ENCODE measurements at regions of chr17 and their contacts with region 1.

Region 1: DNA sequence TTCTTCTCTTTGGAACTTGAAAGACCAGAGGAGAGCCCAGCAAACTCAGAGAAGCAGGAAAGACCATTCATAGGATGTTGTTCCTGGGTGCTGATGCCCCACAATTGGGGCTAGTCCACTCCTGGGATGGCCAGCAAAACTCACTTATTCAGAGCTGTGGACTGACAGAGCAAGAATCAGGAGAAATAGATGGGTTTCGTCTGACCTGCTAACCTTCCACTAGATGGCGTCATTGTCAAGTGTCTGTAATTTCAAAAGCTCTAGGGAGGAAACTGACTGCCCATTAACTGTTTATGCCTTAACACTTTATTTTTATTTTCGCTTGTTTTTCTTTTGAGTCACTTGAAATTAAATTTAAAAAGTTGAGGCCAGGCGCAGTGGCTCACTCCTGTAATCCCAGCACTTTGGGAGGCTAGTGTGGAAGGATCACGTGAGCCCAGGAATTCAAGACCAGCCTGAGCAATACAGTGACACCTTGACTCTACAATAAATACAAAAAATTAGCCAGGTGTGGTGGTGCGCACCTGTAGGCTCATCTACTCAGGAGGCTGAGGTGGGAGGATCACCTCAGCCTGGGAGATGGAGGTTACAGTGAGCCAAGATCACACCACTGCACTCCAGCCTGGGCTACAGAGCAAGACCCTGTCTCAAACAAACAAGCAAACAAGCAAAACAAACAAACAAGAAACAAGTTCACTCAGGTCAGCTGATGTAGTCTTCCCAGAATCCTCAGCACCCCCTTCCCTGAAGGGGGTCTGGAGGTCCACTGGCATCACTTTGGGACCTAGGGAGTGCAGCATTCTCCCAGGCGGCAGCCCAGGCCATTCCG is 28.6 kb upstream of the MILR1 start:
- DNase-seq: peak; percentile 85
- H3K4me3 Mint-ChIP-seq: no peak overlapping the region
- H3K27ac Mint-ChIP-seq: no peak overlapping the region
- H3K4me1 Mint-ChIP-seq: peaks cover 3% of the 10 kb centered on the region
- H3K27me3 Mint-ChIP-seq: peaks cover 8% of the 10 kb centered on the region

Region 2: GRCh38 chr17:64306850-64307463 is 113.4 kb before region 1 on chr17:
- intact Hi-C with region 1: loop called (anchors 1 kb)
- DNase-seq: peak; percentile 89
- H3K4me3 Mint-ChIP-seq: no peak overlapping the region
- H3K27ac Mint-ChIP-seq: no peak overlapping the region
- H3K4me1 Mint-ChIP-seq: peaks cover 4% of the 10 kb centered on the region
- H3K27me3 Mint-ChIP-seq: no peaks in the 10 kb centered on the region

Region 3: DNA sequence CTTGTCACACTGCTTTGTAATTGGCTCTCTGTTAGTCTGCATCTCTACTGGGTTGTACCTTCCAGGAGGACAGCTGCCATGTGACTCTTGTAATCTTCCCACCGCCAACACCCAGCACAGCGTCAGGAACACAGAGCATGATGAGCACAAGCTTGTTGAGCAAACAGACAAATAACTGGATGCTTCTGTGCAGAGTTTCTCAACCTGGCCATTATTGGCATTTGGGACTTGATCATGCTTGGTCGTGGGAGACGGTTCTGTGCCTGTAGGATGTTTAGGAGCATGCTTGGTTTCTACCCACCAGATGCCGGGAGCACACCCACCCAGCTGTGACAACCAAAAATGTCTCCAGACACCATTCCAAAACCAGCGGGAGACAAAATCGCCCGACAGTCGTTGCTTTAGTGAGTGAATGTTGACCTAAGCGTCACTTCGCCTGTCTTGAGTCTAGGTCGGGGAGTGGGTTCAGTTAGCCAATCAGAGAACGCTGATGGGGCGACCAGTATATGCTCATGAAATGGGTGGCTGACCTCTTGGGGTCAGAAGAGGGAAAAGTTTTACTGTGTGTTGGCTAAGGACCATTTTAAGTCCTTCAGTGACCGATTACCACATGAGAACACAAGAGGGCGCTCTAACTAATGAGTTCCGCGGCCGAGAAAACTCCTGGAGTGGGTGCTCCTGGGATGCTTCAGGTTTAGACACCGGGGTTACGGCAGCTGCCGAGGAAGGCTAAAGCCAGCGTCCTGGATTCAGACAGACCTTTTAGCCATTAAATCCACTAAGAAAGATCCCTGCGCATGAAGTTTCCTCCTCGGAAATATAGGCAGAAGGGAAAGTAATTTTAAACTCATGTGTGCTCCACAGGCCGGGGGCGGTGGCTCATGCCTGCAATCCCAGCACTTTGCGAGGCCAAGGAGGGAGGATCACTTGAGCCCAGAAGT is 99.5 kb before region 1 on chr17:
- intact Hi-C with region 1: loop called (anchors 1 kb)
- DNase-seq: peak; percentile 88
- H3K4me3 Mint-ChIP-seq: peak overlapping the region; percentile 55
- H3K27ac Mint-ChIP-seq: no peak overlapping the region
- H3K4me1 Mint-ChIP-seq: peaks cover 2% of the 10 kb centered on the region
- H3K27me3 Mint-ChIP-seq: peaks cover 8% of the 10 kb centered on the region

Region 4: DNA sequence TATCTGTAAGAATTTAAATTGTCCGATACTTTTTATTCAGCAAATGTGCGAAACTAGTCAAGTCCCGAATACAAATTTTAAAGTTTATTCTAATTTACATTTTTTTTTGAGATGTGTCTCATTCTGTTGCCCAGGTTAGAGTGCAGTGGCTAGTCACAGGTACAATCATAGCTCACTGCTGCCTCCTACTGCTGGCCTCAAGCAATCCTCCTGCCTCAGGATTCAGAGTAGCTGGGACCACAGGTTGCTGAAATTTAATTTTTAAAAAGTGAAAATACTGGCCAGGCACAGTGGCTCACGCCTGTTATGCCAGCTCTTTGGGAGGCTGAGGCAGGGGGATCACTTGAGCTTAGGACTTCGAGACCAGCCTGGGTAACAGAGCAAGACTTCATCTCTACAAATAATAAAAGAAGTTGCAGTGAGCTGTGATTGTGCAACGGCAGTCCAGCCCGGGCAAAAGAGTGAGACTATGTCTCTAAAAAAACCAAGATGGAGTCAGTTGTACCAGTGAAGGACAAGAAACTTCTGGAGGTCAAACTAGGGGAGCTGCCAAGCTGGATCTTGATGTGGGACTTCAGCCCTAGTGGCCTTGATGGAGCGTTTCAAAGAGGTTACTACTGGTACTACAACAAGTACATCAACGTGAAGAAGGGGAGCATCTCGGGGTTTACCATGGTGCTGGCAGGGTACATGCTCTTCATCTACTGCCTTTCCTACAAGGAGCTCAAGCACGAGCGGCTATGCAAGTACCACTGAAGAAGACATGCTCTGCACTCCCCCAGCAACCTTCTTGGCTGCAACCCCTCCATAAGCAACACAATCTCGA is 70.9 kb after region 1 on chr17:
- intact Hi-C with region 1: loop called (anchors 1 kb)
- DNase-seq: peak; percentile 90
- H3K4me3 Mint-ChIP-seq: no peak overlapping the region
- H3K27ac Mint-ChIP-seq: no peak overlapping the region
- H3K4me1 Mint-ChIP-seq: peaks cover 25% of the 10 kb centered on the region
- H3K27me3 Mint-ChIP-seq: no peaks in the 10 kb centered on the region

Region 5: GRCh38 chr17:64599827-64600226 is 179.5 kb after region 1 on chr17:
- intact Hi-C with region 1: loop called (anchors 2 kb)
- DNase-seq: no peak
- H3K4me3 Mint-ChIP-seq: peak overlapping the region; percentile 73
- H3K27ac Mint-ChIP-seq: no peak overlapping the region
- H3K4me1 Mint-ChIP-seq: peaks cover 21% of the 10 kb centered on the region
- H3K27me3 Mint-ChIP-seq: no peaks in the 10 kb centered on the region

Region 6: GRCh38 chr17:64653325-64653984 is 233.1 kb after region 1 on chr17:
- intact Hi-C with region 1: loop called (anchors 1 kb)
- DNase-seq: no peak
- H3K4me3 Mint-ChIP-seq: no peak overlapping the region
- H3K27ac Mint-ChIP-seq: no peak overlapping the region
- H3K4me1 Mint-ChIP-seq: peaks cover 26% of the 10 kb centered on the region
- H3K27me3 Mint-ChIP-seq: no peaks in the 10 kb centered on the region

Region 7: GRCh38 chr17:64661976-64662773 is 241.8 kb after region 1 on chr17 and contains the start of gene SMURF2:
- intact Hi-C with region 1: loop called (anchors 5 kb)
- DNase-seq: peak; percentile 94
- H3K4me3 Mint-ChIP-seq: peak within 1 kb of the TSS; percentile 96
- H3K27ac Mint-ChIP-seq: peak within 1 kb of the TSS; percentile 95
- H3K4me1 Mint-ChIP-seq: peaks cover 26% of the 10 kb centered on the region
- H3K27me3 Mint-ChIP-seq: no peaks in the 10 kb centered on the region
- total RNA-seq, gene SMURF2: 10.3 and 11.3 TPM in 2 replicates

Measured in activated CD4-positive, alpha-beta T cell treated with anti-CD3 and anti-CD28 coated beads, Interleukin-2, amount 10 ng/mL, durations not matched to agents 24 days and 14 days (primary cell).